Activated CD4-positive, alpha-beta T cell treated with anti-CD3 and anti-CD28 coated beads for 36 hours (primary cell): ENCODE measurements at regions of chrX and their contacts with region 1.

Region 1: DNA sequence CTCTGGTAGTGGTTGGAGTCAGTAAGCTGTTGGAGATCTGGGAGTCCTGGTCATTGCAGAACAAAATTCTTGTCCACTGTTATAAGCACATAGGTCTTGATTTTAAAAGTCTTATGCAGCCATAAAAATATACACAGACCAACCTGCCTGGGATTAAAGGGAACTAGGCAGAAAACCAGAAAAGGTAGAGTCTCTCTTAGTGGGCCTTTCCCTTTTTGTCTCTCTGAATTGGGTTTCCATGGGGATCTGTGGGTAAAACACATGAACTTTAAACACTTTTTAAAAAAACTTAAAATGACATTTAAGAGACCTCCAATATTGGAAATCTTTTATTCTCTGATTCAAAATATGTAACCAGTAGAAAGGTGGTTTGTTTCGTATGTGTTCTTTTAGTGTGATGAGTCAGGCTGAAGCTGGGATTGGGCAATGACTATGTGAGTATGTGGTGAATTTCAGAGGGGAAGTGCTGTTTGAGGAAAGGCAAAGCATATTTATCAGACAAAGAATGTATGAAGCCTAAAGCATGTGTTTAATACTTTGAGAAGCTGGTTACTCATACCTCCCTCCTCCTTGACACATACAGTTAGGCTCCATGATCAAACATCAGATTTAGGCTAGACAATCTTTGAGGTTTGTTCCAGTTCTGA is 29.6 kb downstream of the SLC16A2 start:
- DNase-seq: peak; percentile 41
- ATAC-seq: peak; percentile 92
- H3K4me3 Mint-ChIP-seq: no peak overlapping the region
- H3K27ac Mint-ChIP-seq: peak overlapping the region; percentile 65
- H3K4me1 Mint-ChIP-seq: peaks cover 28% of the 10 kb centered on the region
- H3K27me3 Mint-ChIP-seq: no peaks in the 10 kb centered on the region

Region 2: DNA sequence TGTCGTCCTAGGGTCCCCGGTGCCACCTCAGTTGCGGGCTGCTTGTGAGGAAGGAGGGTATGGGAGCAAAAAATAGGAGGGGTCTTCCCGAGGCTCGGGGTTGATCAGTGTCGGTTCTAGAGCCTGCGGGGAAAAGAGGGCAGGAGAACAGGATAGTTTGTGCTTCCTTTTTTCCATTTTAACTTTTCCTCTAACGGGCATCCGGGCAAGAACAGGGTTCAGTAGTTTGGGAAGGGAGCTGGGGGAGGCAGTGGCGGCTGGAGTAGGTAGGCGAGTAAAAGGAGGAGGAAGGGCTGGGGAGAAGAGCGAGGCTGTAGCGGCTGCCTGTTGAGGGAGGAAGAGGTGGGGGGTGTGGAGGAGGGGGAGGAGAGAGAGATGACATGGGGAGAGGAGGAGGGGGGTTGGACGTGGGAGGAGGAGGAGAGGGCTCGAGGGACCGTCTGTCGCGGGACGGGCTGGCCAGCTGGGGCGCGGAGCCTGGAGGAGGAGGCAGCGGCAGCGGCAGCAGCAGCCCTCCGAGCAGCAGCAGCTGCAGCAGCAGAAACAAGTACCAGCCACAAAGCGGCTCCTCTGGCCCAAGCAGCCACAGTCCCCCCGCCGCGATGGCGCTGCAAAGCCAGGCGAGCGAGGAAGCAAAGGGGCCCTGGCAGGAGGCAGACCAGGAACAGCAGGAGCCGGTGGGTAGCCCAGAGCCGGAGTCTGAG is 29.7 kb before region 1 on chrX and contains the start of gene SLC16A2:
- CTCF ChIA-PET with region 1: interaction called, 3 read pairs
- POLR2A ChIA-PET with region 1: no interaction called
- intact Hi-C with region 1: loop called in 1 of 2 experiments (anchors 2 kb)
- DNase-seq: peak; percentile 56
- ATAC-seq: peak; percentile 66
- H3K4me3 Mint-ChIP-seq: peak within 1 kb of the TSS; percentile 70
- H3K27ac Mint-ChIP-seq: peak within 1 kb of the TSS; percentile 42
- H3K4me1 Mint-ChIP-seq: peaks cover 3% of the 10 kb centered on the region
- H3K27me3 Mint-ChIP-seq: peaks cover 19% of the 10 kb centered on the region
- total RNA-seq, gene SLC16A2: 1.2 to 1.5 TPM

Region 3: DNA sequence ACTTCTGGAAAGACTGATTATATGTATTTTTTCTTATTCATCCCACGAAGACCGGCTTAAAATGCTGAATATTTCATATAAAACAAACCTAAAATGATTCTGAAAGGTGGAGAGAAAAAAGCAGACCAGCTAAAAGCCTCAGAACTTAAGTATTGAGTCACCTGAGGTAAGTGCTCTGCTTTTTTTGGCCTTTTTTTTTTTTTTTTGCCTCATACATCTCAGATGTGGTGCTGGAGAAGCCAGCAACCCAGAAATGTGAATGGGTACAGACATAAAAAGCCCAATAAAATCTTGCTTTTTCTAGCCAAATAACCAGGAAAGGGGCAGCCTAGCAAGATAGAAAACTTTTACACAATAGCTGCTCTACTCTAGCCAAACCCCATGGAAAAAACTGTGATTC is 106.5 kb after region 1 on chrX:
- CTCF ChIA-PET with region 1: no interaction called
- POLR2A ChIA-PET with region 1: no interaction called
- intact Hi-C with region 1: no loop called
- DNase-seq: no peak
- ATAC-seq: no peak
- H3K4me3 Mint-ChIP-seq: no peak overlapping the region
- H3K27ac Mint-ChIP-seq: no peak overlapping the region
- H3K4me1 Mint-ChIP-seq: no peaks in the 10 kb centered on the region
- H3K27me3 Mint-ChIP-seq: no peaks in the 10 kb centered on the region